ENCODE measurements at regions of chr11 and their contacts with region 1.

Region 1: GRCh38 chr11:59802639-59803176 is 7.9 kb downstream of the MRPL16 start:
- DNase-seq: no peak
- ATAC-seq: peak; percentile 81 to 91 (median 84)
- H3K4me3 ChIP-seq: no peak overlapping the region
- H3K27ac ChIP-seq: no peak overlapping the region
- H3K4me1 ChIP-seq: no peaks in the 10 kb centered on the region
- H3K27me3 ChIP-seq: no peaks in the 10 kb centered on the region
- CTCF ChIP-seq: peak; percentile 67 to 83 (median 73)
- POLR2A ChIP-seq: no peak

Region 2: GRCh38 chr11:59753650-59754493 is 48.8 kb before region 1 on chr11:
- intact Hi-C with region 1: loop called (anchors 5 kb)
- DNase-seq: peak; percentile 89 to 90 (median 90)
- ATAC-seq: peak; percentile 76 to 87 (median 84)
- H3K4me3 ChIP-seq: peak overlapping the region; percentile 84 to 88 (median 88)
- H3K27ac ChIP-seq: peak overlapping the region; percentile 84 to 94 (median 86)
- H3K4me1 ChIP-seq: no peaks in the 10 kb centered on the region
- H3K27me3 ChIP-seq: no peaks in the 10 kb centered on the region
- CTCF ChIP-seq: peak; percentile 86 to 94 (median 92)
- POLR2A ChIP-seq: no peak

Region 3: DNA sequence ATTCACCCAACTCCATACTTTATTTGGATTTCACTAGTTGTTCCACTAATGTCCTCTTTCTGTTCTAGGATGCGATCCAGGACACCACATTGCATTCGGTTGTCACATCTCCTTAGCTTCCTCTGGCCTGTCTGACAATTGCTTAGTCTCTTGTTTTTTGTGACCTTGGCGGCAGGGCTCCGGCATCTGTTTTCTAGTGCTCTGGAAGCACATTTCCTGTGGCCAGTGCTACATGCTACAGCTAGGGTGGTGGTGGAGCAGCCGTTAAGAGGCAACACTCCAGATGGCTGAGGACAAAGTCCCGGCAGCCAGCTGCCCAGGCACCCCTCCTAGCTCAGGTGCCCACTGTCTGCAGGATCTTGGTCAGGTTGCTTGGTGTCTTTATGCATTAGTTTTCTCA is 40.7 kb before region 1 on chr11:
- intact Hi-C with region 1: loop called in 1 of 2 experiments (anchors 5 kb)
- DNase-seq: no peak
- ATAC-seq: peak; percentile 23 to 65 (median 28)
- H3K4me3 ChIP-seq: no peak overlapping the region
- H3K27ac ChIP-seq: no peak overlapping the region
- H3K4me1 ChIP-seq: no peaks in the 10 kb centered on the region
- H3K27me3 ChIP-seq: no peaks in the 10 kb centered on the region
- CTCF ChIP-seq: no peak
- POLR2A ChIP-seq: no peak

Region 4: DNA sequence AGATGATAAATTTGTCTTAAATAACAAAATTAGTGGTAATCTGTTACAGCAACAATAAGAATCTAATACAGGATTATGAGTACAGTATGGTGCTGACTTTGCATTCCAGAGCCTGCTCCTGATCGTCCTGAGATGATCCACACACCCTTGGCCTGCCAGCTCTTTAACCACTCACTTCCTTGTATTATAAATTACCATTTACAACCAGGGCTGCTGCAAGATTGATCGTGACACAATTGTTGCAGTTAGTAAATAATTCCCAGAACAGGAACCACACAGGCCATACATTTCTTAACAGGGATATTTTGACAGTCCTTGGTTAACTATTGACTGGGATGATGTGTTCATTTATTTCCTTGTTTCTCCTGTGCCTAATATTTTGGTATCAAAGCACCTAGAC is 46.4 kb after region 1 on chr11:
- intact Hi-C with region 1: no loop called
- DNase-seq: no peak
- ATAC-seq: peak in 2 of 4 donors; percentile 45 to 76
- H3K4me3 ChIP-seq: no peak overlapping the region
- H3K27ac ChIP-seq: no peak overlapping the region
- H3K4me1 ChIP-seq: no peaks in the 10 kb centered on the region
- H3K27me3 ChIP-seq: no peaks in the 10 kb centered on the region
- CTCF ChIP-seq: no peak
- POLR2A ChIP-seq: no peak

Region 5: GRCh38 chr11:59891781-59892181 is 89.1 kb after region 1 on chr11:
- intact Hi-C with region 1: no loop called
- DNase-seq: no peak
- ATAC-seq: no peak
- H3K4me3 ChIP-seq: no peak overlapping the region
- H3K27ac ChIP-seq: no peak overlapping the region
- H3K4me1 ChIP-seq: no peaks in the 10 kb centered on the region
- H3K27me3 ChIP-seq: no peaks in the 10 kb centered on the region
- CTCF ChIP-seq: no peak
- POLR2A ChIP-seq: no peak

Region 6: GRCh38 chr11:60040109-60040508 is 237.4 kb after region 1 on chr11 and contains the start of gene OOSP2:
- intact Hi-C with region 1: no loop called
- DNase-seq: no peak
- ATAC-seq: no peak
- H3K4me3 ChIP-seq: no peak within 1 kb of the TSS
- H3K27ac ChIP-seq: no peak within 1 kb of the TSS
- H3K4me1 ChIP-seq: no peaks in the 10 kb centered on the region
- H3K27me3 ChIP-seq: no peaks in the 10 kb centered on the region
- CTCF ChIP-seq: no peak
- POLR2A ChIP-seq: no peak
- total RNA-seq, gene OOSP2: not detected

Measured in right lobe of liver (tissue), 6 donors.